Lower leg skin (tissue), 4 donors: ENCODE measurements at regions of chr4 and their contacts with region 1.

Region 1: DNA sequence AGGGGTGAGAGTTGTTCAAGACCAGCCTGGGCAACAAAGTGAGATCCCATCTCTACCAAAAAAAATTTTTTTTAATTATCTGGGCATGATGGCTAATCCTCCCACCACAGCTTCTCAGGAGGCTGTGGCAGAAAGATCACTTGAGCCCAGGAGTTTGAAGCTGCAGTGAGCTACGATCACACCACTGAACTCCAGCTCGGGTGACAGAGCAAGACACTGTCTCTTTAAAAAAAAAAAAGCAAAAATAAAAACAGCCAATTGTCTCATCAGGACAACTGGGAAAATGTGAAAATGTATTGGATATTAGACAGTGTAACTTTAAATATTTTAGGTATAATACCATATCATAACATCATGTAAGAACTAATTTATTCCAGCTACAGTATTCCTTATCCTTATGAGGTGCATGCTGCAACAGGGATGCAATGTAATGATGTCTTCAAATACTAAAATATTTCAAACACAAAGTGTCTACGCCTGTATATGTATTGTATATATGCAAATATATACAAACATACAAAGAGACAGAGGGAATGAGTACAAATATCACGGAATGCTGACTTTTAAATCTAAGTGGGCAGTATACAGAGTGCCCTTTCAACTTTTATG is 17.2 kb downstream of the FAM13A start:
- DNase-seq: no peak
- H3K4me3 ChIP-seq: no peak overlapping the region
- CTCF ChIP-seq: no peak
- POLR2A ChIP-seq: no peak

Region 2: GRCh38 chr4:88366460-88366859 is 673.4 kb before region 1 on chr4:
- intact Hi-C with region 1: loop called (anchors 10 kb)
- DNase-seq: no peak
- H3K4me3 ChIP-seq: no peak overlapping the region
- CTCF ChIP-seq: no peak
- POLR2A ChIP-seq: no peak